ENCODE measurements at regions of chr10 and their contacts with region 1.

Region 1: GRCh38 chr10:9091530-9092093 is 1037.1 kb downstream of the GATA3 start:
- DNase-seq: no peak
- H3K4me3 Mint-ChIP-seq: no peak overlapping the region
- H3K27ac Mint-ChIP-seq: peak overlapping the region; percentile 24
- H3K4me1 Mint-ChIP-seq: peaks cover 49% of the 10 kb centered on the region
- H3K27me3 Mint-ChIP-seq: no peaks in the 10 kb centered on the region

Region 2: GRCh38 chr10:8065651-8066050 is 1026.0 kb before region 1 on chr10:
- intact Hi-C with region 1: loop called (anchors 5 kb)
- DNase-seq: no peak
- H3K4me3 Mint-ChIP-seq: peak overlapping the region; percentile 92
- H3K27ac Mint-ChIP-seq: peak overlapping the region; percentile 94
- H3K4me1 Mint-ChIP-seq: peaks cover 87% of the 10 kb centered on the region
- H3K27me3 Mint-ChIP-seq: no peaks in the 10 kb centered on the region

Region 3: DNA sequence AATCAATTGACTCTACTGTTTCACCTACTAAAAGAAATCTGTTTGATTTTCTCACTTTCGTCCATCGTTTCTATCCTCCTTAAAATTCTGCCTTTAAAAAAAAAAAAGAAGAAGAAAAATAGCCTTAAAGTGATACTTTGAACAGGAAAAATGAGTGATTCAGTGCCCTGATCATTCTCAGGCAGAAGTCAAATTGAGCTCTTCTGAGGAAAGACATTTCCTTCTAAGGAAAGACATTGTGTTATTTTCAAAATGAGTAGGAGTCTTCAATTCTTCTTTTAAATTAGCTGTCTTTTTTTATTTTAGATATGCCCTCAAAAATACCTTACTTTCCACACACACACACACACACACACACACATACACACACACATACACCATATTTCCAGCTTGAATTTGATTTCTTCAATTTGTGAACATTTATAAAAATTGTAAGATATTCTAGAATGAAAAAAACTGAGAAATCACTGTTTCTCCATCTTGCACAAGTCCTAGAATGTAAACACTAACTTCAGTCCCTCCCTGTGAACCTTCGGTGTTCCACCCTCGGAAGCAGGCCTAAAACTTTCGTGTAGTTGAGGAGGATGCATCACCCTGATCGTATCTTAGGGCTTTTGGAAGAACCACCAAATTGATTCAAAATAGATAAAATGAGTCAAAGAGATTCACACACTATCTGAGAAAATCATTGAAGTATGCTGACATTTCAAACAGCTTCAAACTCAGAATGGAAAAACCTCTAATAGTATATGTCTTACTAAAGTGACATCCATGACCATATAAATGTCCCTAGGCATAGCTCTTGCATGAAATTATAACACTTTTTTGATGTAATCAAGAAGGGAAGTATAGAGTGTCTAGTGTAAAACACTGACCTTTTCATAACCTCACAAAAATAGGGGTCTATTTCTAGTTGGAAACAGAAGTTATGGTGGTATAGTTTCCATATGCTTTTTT is 766.3 kb before region 1 on chr10:
- intact Hi-C with region 1: loop called (anchors 1 kb)
- DNase-seq: peak; percentile 42
- H3K4me3 Mint-ChIP-seq: peak overlapping the region; percentile 40
- H3K27ac Mint-ChIP-seq: peak overlapping the region; percentile 93
- H3K4me1 Mint-ChIP-seq: peaks cover 78% of the 10 kb centered on the region
- H3K27me3 Mint-ChIP-seq: no peaks in the 10 kb centered on the region

Region 4: DNA sequence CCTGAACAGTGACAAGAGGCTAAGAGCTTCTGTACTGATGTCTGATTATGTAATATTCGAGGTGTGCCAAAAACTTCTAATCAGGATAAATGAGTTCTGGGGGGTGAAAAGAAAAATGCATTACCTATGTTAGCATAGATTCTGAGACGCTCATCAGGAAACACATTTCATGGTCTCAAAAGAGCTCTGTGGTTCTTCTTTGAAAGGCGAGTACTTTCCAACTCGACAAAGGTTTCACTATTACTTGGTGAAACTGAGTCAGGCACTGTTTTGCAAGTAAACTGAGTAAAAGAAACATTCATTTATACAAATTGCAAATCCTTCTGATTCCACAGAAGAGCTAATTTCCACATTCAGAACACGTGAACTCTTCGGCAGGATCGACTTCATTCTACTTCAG is 513.9 kb before region 1 on chr10:
- intact Hi-C with region 1: loop called (anchors 5 kb)
- DNase-seq: no peak
- H3K4me3 Mint-ChIP-seq: no peak overlapping the region
- H3K27ac Mint-ChIP-seq: peak overlapping the region; percentile 89
- H3K4me1 Mint-ChIP-seq: peaks cover 69% of the 10 kb centered on the region
- H3K27me3 Mint-ChIP-seq: no peaks in the 10 kb centered on the region

Region 5: GRCh38 chr10:8852546-8852945 is 239.1 kb before region 1 on chr10:
- intact Hi-C with region 1: no loop called
- DNase-seq: no peak
- H3K4me3 Mint-ChIP-seq: no peak overlapping the region
- H3K27ac Mint-ChIP-seq: no peak overlapping the region
- H3K4me1 Mint-ChIP-seq: no peaks in the 10 kb centered on the region
- H3K27me3 Mint-ChIP-seq: peaks cover 3% of the 10 kb centered on the region

Region 6: DNA sequence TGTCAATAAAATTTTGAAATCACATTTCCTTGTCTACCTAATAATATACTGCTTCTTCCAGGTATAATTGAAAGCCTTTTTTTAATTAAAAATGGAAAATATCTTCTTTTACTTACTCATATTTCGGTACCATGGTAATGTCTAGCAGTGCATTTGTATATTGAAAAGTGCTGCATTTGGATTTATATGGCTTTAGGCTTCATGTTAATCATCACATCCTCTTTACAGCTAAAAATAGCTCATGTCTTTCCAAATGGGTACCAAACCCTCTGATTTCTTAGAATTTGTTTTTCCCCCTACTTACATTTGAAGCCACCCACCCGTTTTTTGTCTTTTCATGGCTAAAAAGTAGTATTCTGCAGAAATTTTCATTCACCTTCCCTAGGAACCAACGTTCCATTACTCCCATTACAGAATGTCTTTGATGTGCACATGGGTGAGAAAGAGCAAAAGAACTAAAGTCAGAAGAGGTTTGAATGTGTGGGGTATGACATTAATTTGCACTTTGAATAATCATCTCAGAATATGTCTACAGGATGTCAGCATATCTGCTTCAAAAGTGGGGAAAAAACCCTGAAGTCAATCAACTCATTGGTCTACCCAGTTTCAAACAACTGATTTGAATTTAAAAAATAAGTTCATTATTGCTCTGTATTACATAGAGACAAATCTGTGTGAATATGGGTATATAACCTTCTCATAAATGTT is 101.2 kb before region 1 on chr10:
- intact Hi-C with region 1: loop called (anchors 2 kb)
- DNase-seq: no peak
- H3K4me3 Mint-ChIP-seq: no peak overlapping the region
- H3K27ac Mint-ChIP-seq: peak overlapping the region; percentile 73
- H3K4me1 Mint-ChIP-seq: peaks cover 58% of the 10 kb centered on the region
- H3K27me3 Mint-ChIP-seq: no peaks in the 10 kb centered on the region

Region 7: DNA sequence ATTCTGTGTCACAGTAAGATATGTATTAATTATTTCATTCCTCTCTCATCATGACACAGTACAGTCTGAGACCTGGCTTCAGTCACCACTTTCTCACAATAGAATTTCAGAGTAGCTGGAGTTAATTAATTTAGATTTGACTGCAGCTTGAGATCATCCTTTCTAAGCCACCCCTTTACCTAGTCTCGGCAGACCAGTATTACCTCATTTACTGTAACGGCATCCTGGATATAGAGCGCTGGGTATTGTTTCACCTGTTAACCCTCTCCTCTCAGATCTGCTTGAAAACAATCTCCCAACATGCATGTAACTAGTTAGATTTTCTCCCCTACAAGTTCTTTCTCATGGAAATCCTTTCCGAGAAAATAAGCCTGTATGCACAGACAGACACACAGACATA is 20.4 kb after region 1 on chr10:
- intact Hi-C with region 1: no loop called
- DNase-seq: no peak
- H3K4me3 Mint-ChIP-seq: no peak overlapping the region
- H3K27ac Mint-ChIP-seq: no peak overlapping the region
- H3K4me1 Mint-ChIP-seq: no peaks in the 10 kb centered on the region
- H3K27me3 Mint-ChIP-seq: no peaks in the 10 kb centered on the region

Region 8: DNA sequence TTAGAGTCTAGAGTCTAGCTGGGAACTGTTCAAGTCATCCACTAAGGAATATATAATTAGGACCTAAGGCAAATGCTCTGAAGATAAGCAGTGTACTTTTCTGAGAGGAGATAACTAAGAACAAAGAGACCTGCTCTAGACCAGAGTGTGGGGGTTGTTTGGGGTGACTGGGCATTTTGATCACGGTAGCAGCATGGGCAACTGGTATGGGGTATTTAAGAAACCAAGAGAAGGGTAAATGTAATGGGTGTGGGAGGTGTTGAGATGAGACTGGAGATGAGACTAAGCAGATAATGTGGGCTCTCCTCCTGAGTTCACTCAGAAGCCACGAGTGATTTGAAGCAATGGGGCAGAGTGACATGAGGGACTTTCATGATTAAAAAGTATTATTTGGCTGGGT is 45.8 kb after region 1 on chr10:
- intact Hi-C with region 1: loop called (anchors 1 kb)
- DNase-seq: no peak
- H3K4me3 Mint-ChIP-seq: no peak overlapping the region
- H3K27ac Mint-ChIP-seq: peak overlapping the region; percentile 52
- H3K4me1 Mint-ChIP-seq: peaks cover 6% of the 10 kb centered on the region
- H3K27me3 Mint-ChIP-seq: no peaks in the 10 kb centered on the region

Region 9: DNA sequence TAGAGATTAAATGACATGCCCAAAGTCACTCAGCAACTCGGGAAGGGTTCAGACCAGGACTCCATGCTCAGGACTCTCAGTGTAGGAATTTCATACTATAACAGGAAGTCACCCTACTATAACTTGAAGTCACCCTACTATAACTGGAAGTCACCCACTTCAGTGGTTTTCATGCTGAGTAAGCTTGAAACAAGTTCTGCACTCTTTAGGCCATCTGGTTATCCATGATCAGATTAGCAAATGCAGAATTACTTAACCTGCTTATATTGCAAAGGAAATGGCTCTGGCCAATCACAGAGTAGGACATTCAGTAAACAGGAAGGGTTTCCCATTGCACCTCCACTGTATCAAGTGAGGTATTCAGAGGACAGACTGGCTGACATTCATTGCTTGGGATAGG is 203.3 kb after region 1 on chr10:
- intact Hi-C with region 1: loop called (anchors 5 kb)
- DNase-seq: no peak
- H3K4me3 Mint-ChIP-seq: no peak overlapping the region
- H3K27ac Mint-ChIP-seq: peak overlapping the region; percentile 71
- H3K4me1 Mint-ChIP-seq: peaks cover 27% of the 10 kb centered on the region
- H3K27me3 Mint-ChIP-seq: peaks cover 2% of the 10 kb centered on the region

Measured in activated T-helper 2 cell treated with anti-CD3 and anti-CD28 coated beads, Interferon-gamma antibody, Interleukin-2, Interleukin-4, amounts not matched to agents 10 μg/mL and 5 μg/mL and 100 μg/mL, durations not matched to agents 14 hours and 24 hours and 36 hours (primary cell).